ENCODE measurements at regions of chr11 and their contacts with region 1.

Region 1: GRCh38 chr11:68297812-68298658 is 14.4 kb upstream of the LRP5 start:
- DNase-seq: peak; percentile 79
- H3K4me3 Mint-ChIP-seq: no peak overlapping the region
- H3K27ac Mint-ChIP-seq: no peak overlapping the region
- H3K4me1 Mint-ChIP-seq: peaks cover 9% of the 10 kb centered on the region
- H3K27me3 Mint-ChIP-seq: peaks cover 33% of the 10 kb centered on the region

Region 2: GRCh38 chr11:68206187-68206601 is 91.8 kb before region 1 on chr11:
- CTCF ChIA-PET with region 1: interaction called, 28 read pairs
- DNase-seq: peak; percentile 30
- H3K4me3 Mint-ChIP-seq: no peak overlapping the region
- H3K27ac Mint-ChIP-seq: no peak overlapping the region
- H3K4me1 Mint-ChIP-seq: peaks cover 39% of the 10 kb centered on the region
- H3K27me3 Mint-ChIP-seq: peaks cover 8% of the 10 kb centered on the region

Region 3: DNA sequence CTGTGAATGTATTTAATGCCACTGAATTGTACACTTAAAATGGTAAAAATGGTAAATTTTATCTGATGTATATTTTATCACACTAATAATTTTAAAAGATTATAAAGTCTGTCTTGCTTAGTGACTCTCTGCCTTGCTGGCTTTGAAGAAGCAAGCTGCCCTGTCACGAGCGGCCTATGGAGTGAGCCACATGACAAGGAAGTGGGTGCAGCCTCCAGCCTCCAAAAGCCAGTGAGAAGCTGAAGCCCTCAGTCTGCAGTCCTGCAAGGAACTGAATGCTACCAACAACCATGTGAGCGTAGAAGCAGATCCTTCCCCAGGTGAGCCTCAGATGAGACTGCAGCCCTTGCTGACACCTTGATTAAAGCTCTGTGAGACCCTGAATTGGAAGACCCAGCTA is 46.3 kb before region 1 on chr11:
- CTCF ChIA-PET with region 1: interaction called, 173 read pairs
- DNase-seq: no peak
- H3K4me3 Mint-ChIP-seq: no peak overlapping the region
- H3K27ac Mint-ChIP-seq: no peak overlapping the region
- H3K4me1 Mint-ChIP-seq: no peaks in the 10 kb centered on the region
- H3K27me3 Mint-ChIP-seq: peaks cover 14% of the 10 kb centered on the region

Region 4: GRCh38 chr11:68257475-68258362 is 40.3 kb before region 1 on chr11:
- CTCF ChIA-PET with region 1: interaction called, 173 read pairs
- DNase-seq: peak; percentile 97
- H3K4me3 Mint-ChIP-seq: no peak overlapping the region
- H3K27ac Mint-ChIP-seq: no peak overlapping the region
- H3K4me1 Mint-ChIP-seq: peaks cover 4% of the 10 kb centered on the region
- H3K27me3 Mint-ChIP-seq: peaks cover 22% of the 10 kb centered on the region

Region 5: DNA sequence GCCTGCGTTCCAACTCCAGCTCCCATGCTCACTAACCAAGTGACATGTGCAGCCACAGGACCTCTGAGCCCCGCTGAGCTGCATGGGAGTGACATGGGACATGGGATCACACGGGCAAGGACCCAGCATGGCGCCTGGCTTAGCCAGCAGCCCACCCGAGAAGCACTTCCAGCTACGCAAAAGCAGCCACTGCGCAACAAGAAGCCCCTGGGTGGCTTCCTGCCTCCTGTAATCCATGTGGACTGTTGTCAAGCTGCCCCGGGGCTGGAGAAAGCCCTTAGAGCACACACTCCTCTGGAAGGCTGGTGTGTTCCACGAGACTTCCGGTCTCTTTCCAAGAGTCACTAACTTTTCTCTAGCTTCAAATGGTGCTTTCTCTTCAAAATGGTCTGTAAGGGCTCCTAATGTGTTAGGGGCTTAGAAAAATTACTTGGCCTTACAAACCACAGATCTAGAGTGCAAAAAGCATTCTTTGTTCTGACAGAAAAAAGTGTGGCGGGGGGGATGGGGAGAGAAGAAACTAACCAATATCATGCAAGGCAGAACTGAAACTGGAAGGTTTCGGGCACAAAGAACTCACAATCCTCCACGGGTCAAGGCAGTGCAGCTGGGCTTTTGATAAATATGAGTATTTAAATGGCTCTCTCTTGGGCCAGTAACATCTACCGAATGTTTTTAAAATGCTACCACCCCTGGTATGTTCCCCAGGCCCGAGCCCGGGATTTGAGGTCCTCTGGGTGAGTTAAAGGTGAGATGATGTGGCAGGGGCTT is 31.7 kb before region 1 on chr11:
- CTCF ChIA-PET with region 1: interaction called, 173 read pairs
- DNase-seq: no peak
- H3K4me3 Mint-ChIP-seq: no peak overlapping the region
- H3K27ac Mint-ChIP-seq: no peak overlapping the region
- H3K4me1 Mint-ChIP-seq: peaks cover 28% of the 10 kb centered on the region
- H3K27me3 Mint-ChIP-seq: no peaks in the 10 kb centered on the region

Region 6: DNA sequence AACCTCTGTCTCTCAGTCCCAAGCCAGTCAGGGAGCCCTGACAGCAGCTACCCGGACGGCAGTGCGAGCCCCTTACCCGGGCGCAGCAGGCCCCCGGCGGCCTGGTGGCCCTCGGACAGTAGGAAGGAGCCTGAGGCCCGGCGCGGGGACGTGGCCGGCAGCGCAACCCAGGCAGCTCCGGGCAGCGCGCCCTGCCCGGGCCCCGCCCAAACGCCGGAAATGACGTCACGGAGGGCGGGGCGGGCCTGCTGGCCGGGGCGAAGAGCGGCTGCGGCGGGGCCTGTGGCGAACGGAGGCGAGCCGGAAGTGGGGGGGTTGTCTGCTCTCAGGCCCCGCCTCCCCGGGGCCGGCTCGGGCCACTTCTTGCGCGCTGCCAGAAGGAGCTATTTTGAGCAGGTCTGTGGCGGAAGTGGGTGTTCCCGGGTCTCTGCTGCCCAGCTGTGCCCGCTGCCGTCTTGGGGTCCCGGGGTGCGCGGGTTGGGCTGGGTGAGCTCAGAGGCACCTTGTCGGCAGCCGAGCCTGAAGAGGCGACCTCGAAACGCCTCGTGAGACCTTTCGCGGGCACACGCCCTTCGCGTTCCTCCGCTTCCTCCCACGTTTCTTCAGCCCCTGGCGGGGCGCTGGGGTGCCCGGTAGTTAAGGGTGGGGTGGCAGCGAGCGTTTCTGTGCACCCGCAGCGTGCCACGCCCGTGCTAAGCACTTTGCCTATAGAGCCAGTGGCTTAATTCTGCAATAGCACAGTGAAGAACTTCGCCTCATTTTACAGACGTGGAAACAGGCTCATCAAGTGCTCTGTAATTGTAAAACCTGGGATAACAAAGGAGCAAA is 26.0 kb before region 1 on chr11 and contains the start of gene C11orf24:
- CTCF ChIA-PET with region 1: interaction called, 68 read pairs
- DNase-seq: peak; percentile 94
- H3K4me3 Mint-ChIP-seq: peak within 1 kb of the TSS; percentile 96
- H3K27ac Mint-ChIP-seq: peak within 1 kb of the TSS; percentile 97
- H3K4me1 Mint-ChIP-seq: peaks cover 43% of the 10 kb centered on the region
- H3K27me3 Mint-ChIP-seq: peaks cover 4% of the 10 kb centered on the region

Region 7: DNA sequence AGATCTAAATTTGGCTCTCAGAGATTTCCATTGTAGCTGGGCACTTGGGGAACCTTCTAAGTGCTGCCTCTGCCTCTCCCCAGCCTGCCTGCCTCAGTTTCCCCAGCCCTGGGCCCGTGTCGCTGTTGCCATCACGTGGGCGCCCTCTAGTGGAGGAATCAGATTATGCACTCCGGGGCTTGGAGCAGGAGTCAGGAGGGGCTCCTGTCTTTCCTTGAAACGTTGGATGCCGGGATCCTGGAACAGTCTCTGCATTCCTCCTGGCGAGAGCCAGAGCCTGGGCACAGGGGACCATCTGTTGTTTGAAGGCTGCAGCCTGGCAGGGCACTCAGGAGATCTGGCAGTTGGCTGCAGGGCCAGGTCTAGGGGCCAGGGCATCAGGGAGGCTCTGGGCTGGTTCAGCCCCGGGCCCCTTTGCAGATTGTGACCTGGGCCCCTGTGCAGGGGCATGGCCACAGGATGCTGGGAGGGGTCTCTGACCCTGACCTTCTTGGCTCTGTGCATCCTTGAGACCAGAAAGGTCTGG is 86.0 kb after region 1 on chr11:
- CTCF ChIA-PET with region 1: interaction called, 35 read pairs
- DNase-seq: peak; percentile 79
- H3K4me3 Mint-ChIP-seq: no peak overlapping the region
- H3K27ac Mint-ChIP-seq: no peak overlapping the region
- H3K4me1 Mint-ChIP-seq: peaks cover 47% of the 10 kb centered on the region
- H3K27me3 Mint-ChIP-seq: no peaks in the 10 kb centered on the region